MCF 10A (cell line): ENCODE measurements at regions of chr2 and their contacts with region 1.

Region 1: DNA sequence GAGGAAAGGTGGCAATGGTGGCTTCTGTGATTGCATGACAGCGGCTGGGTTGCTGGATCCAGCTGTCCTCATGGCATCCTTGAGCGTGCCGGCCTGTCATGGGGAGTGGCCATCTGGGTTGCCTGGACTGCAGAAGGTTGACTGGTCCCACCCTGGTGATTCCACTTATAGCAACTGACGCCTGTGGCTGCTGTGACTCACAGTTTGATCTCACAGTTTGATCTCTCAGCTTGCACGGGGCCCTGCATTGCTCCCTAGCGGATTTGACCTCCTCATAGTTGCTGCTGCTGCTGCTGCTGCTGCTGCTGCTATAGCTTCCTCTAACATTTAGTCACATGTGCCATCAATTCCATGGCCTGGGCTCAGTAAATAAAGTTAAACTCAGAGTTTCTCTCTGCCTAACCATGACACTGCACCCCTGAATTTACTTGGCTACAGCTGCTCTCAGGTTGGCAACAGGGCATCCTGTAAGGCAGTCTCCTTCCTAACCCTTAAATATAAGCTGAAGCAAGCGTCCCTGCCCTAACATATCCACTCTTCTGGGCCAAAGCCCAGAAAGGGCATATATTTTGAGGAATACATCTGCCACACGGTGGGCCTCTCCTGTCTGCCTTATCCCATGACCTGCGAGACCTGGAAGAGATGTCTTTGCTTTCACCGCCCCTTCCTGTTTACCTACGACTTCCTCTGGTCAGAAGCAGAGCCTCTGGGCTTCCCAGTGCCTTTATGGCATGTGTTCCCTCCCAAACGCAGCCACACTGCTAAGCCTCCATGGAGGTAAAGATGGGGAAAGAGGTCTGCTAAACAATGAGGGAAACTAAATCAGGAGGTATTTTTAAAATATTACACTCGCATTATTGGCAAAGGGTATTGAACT is 37.8 kb upstream of the CCDC150 start:
- DNase-seq: peak; percentile 89
- H3K4me3 Mint-ChIP-seq: peak overlapping the region; percentile 10
- H3K27ac Mint-ChIP-seq: peak overlapping the region; percentile 90
- H3K4me1 Mint-ChIP-seq: peaks cover 9% of the 10 kb centered on the region
- H3K27me3 Mint-ChIP-seq: no peaks in the 10 kb centered on the region
- CTCF ChIP-seq: no peak

Region 2: GRCh38 chr2:196076778-196077568 is 524.7 kb before region 1 on chr2:
- CTCF ChIA-PET with region 1: no interaction called
- POLR2A ChIA-PET with region 1: no interaction called
- intact Hi-C with region 1: no loop called
- DNase-seq: no peak
- H3K4me3 Mint-ChIP-seq: no peak overlapping the region
- H3K27ac Mint-ChIP-seq: no peak overlapping the region
- H3K4me1 Mint-ChIP-seq: no peaks in the 10 kb centered on the region
- H3K27me3 Mint-ChIP-seq: no peaks in the 10 kb centered on the region
- CTCF ChIP-seq: no peak

Region 3: GRCh38 chr2:196291873-196292800 is 309.5 kb before region 1 on chr2:
- CTCF ChIA-PET with region 1: interaction called, 3 read pairs
- POLR2A ChIA-PET with region 1: interaction called, 3 read pairs
- intact Hi-C with region 1: loop called (anchors 2 kb)
- DNase-seq: peak; percentile 87
- H3K4me3 Mint-ChIP-seq: peak overlapping the region; percentile 4
- H3K27ac Mint-ChIP-seq: peak overlapping the region; percentile 31
- H3K4me1 Mint-ChIP-seq: peaks cover 36% of the 10 kb centered on the region
- H3K27me3 Mint-ChIP-seq: no peaks in the 10 kb centered on the region
- CTCF ChIP-seq: no peak

Region 4: DNA sequence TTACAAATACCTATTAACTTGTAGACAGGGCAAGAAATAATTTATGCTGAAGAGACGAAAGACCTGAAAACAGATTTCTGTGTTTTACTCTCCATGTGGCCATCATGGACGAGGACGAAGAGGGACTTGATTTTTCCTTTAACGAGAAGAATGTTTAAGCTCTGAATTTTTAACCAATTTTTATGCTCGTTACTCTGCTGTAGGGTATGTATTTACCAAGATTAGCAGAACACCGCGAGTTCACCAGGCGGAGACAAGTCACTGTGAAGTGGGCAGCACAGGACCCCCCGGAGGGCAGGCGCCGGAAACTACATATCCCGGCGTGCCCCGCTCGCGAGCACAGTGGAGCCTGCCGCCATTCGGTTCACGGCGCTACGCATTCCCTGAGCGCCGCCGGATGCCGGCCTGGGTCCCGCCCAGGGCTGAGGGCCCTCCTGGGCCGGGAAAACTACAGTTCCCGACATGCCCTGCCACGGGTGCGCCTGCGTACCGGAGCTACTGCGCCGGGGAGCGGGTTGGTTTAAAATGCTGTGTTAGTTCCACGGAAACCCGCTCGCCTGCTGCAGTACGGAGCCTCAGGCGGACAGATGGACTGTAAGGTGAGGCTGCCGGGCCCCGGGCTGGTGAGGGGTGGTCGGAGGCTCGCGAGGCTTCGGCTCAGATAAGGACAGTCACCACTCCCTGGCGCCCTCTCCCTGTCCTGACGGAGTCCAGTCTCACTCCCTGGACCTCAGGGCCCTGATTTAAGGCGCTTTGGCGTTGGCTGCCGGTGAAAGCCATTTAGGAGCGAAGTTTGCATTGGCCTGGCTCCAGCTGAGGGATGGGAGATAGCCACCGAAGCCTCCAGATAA is 37.7 kb after region 1 on chr2 and contains the start of gene CCDC150:
- CTCF ChIA-PET with region 1: interaction called, 5 read pairs
- POLR2A ChIA-PET with region 1: interaction called, 7 read pairs
- intact Hi-C with region 1: loop called (anchors 2 kb)
- DNase-seq: peak; percentile 94
- H3K4me3 Mint-ChIP-seq: peak within 1 kb of the TSS; percentile 94
- H3K27ac Mint-ChIP-seq: peak within 1 kb of the TSS; percentile 71
- H3K4me1 Mint-ChIP-seq: peaks cover 16% of the 10 kb centered on the region
- H3K27me3 Mint-ChIP-seq: no peaks in the 10 kb centered on the region
- CTCF ChIP-seq: no peak
- total RNA-seq, gene CCDC150: 5.5 and 8.1 TPM in 2 replicates